AG04450 (cell line): ENCODE measurements at regions of chr12 and their contacts with region 1.

Region 1: GRCh38 chr12:31259136-31259886 is 66.6 kb downstream of the SINHCAF start:
- DNase-seq: no peak
- H3K4me3 ChIP-seq: no peak overlapping the region
- H3K27ac ChIP-seq: no peak overlapping the region
- H3K27me3 ChIP-seq: no peaks in the 10 kb centered on the region
- CTCF ChIP-seq: no peak

Region 2: GRCh38 chr12:31245822-31246469 is 13.4 kb before region 1 on chr12:
- CTCF ChIA-PET with region 1: interaction called, 10 read pairs
- POLR2A ChIA-PET with region 1: no interaction called
- DNase-seq: no peak
- H3K4me3 ChIP-seq: no peak overlapping the region
- H3K27ac ChIP-seq: no peak overlapping the region
- H3K27me3 ChIP-seq: peaks cover 11% of the 10 kb centered on the region
- CTCF ChIP-seq: peak; percentile 11; the same call in 1 of the 2 replicates